ENCODE measurements at regions of chr13 and their contacts with region 1.

Region 1: DNA sequence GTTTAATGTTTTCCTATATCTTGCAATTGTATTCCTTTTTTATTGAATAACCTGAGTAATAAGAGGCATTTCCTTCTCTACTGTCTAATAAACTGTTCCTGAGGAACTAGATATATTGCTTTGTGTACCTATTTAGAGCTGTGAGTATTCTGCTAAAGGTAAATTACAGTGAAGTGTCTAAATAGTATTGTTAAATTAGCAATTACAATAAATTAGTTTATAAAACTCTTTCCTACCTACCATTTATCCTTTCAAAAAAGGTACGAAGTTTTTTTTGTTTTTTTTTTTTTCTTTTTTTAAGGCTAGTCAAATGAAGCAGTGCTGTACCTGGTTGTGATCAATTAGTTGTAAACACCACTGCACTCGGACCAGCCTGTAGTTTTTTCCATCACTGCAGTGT is 34.8 kb downstream of the TM9SF2 start:
- DNase-seq: no peak
- ATAC-seq: no peak
- H3K4me3 ChIP-seq: no peak overlapping the region
- H3K4me3 Mint-ChIP-seq: no peak overlapping the region
- H3K27ac ChIP-seq: no peak overlapping the region
- H3K27ac Mint-ChIP-seq: no peak overlapping the region
- H3K4me1 ChIP-seq: no peaks in the 10 kb centered on the region
- H3K4me1 Mint-ChIP-seq: peaks cover 19% of the 10 kb centered on the region
- H3K27me3 ChIP-seq: no peaks in the 10 kb centered on the region
- H3K27me3 Mint-ChIP-seq: no peaks in the 10 kb centered on the region
- CTCF ChIP-seq: no peak

Region 2: DNA sequence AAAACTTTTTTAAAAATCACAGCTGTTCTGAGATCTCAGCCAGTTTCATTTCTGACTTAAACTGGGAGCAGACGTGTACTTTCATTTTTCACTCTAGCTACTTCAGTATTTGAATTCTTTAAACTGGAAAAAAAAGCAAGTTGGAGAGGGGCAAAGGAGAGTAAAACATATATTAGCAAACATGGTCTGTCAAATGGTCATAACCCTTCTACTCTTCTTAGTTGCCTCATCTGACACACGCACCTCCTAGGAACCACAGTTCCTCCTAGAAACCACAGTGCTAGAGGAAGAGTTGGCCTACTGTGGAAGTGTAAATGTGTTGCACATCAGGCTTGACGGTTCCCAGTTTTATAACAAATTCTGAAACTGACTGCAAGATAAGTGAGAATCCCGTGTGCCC is 12.4 kb after region 1 on chr13:
- CTCF ChIA-PET with region 1: no interaction called
- POLR2A ChIA-PET with region 1: no interaction called
- intact Hi-C with region 1: loop called in 1 of 2 experiments (anchors 2 kb)
- DNase-seq: peak in 1 of 9 experiments; percentile 14
- ATAC-seq: no peak
- H3K4me3 ChIP-seq: no peak overlapping the region
- H3K4me3 Mint-ChIP-seq: no peak overlapping the region
- H3K27ac ChIP-seq: peak overlapping the region in 1 of 2 experiments; percentile 10
- H3K27ac Mint-ChIP-seq: no peak overlapping the region
- H3K4me1 ChIP-seq: peaks cover 11% of the 10 kb centered on the region
- H3K4me1 Mint-ChIP-seq: peaks cover 17% of the 10 kb centered on the region
- H3K27me3 ChIP-seq: no peaks in the 10 kb centered on the region
- H3K27me3 Mint-ChIP-seq: no peaks in the 10 kb centered on the region
- CTCF ChIP-seq: no peak

Measured in CD8-positive, alpha-beta T cell (primary cell).